Left ventricle myocardium superior (tissue), 1 donor: ENCODE measurements at regions of chr9 and their contacts with region 1.

Region 1: GRCh38 chr9:71703172-71703872 is 65.0 kb downstream of the CEMIP2 start:
- DNase-seq: no peak
- ATAC-seq: peak; percentile 65

Region 2: GRCh38 chr9:71614409-71615010 is 88.8 kb before region 1 on chr9:
- intact Hi-C with region 1: loop called (anchors 10 kb)
- DNase-seq: no peak
- ATAC-seq: no peak

Region 3: GRCh38 chr9:71725590-71726338 is 22.4 kb after region 1 on chr9:
- intact Hi-C with region 1: no loop called
- DNase-seq: no peak
- ATAC-seq: no peak